ENCODE measurements at regions of chr12 and their contacts with region 1.

Region 1: DNA sequence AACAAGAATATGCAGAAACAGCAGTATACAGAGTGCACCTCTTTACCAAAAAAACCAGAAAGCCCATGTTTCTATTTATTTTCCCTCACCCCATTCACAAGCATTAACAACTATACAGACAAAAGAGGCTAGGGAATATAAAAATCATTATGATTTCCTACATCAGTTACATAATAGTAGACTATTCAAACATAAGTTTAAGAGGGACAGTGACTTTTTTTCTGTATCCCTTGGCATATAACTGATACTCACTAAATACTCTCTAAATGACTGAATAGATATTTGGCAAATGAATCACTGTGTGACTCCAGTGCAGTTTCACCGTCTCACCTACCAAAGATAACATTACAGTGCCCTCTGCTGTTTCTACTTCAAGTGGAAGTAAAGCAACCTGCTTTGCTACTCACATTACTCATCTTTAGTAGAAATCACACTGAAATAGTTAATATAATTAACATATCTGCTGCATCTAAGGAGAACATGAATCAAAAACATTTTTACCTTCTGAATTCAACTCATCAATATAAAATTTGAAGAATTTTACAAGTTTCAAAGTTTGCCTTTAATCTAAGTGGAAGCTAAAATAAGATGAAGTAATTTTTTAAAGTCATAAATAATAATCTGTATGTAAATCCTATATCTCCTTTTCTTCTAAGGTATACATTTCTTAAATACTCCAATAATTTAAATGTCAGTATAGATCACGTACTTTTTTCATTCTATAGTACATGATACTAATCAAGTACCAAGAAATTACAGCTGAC is 103.8 kb downstream of the OSBPL8 start:
- DNase-seq: no peak
- ATAC-seq: peak; percentile 55 to 85 (median 74)
- H3K4me3 ChIP-seq: no peak overlapping the region
- H3K27ac ChIP-seq: no peak overlapping the region
- H3K4me1 ChIP-seq: peaks cover 0 to 17% (median 2%) of the 10 kb centered on the region in 12 donors
- H3K27me3 ChIP-seq: no peaks in the 10 kb centered on the region
- CTCF ChIP-seq: peak; percentile 5 to 65 (median 50)
- POLR2A ChIP-seq: no peak

Region 2: GRCh38 chr12:76055393-76055792 is 400.4 kb before region 1 on chr12:
- intact Hi-C with region 1: loop called in 1 of 10 experiments (anchors 10 kb)
- DNase-seq: no peak
- ATAC-seq: no peak
- H3K4me3 ChIP-seq: no peak overlapping the region
- H3K27ac ChIP-seq: no peak overlapping the region
- H3K4me1 ChIP-seq: no peaks in the 10 kb centered on the region
- H3K27me3 ChIP-seq: no peaks in the 10 kb centered on the region
- CTCF ChIP-seq: no peak
- POLR2A ChIP-seq: no peak

Region 3: GRCh38 chr12:76074701-76075336 is 380.9 kb before region 1 on chr12:
- intact Hi-C with region 1: loop called in 2 of 10 experiments (anchors 10 kb)
- DNase-seq: no peak
- ATAC-seq: peak in 1 of 4 donors; percentile 24
- H3K4me3 ChIP-seq: no peak overlapping the region
- H3K27ac ChIP-seq: no peak overlapping the region
- H3K4me1 ChIP-seq: peaks cover 0 to 50% (median 20%) of the 10 kb centered on the region in 12 donors
- H3K27me3 ChIP-seq: no peaks in the 10 kb centered on the region
- CTCF ChIP-seq: no peak
- POLR2A ChIP-seq: no peak

Region 4: DNA sequence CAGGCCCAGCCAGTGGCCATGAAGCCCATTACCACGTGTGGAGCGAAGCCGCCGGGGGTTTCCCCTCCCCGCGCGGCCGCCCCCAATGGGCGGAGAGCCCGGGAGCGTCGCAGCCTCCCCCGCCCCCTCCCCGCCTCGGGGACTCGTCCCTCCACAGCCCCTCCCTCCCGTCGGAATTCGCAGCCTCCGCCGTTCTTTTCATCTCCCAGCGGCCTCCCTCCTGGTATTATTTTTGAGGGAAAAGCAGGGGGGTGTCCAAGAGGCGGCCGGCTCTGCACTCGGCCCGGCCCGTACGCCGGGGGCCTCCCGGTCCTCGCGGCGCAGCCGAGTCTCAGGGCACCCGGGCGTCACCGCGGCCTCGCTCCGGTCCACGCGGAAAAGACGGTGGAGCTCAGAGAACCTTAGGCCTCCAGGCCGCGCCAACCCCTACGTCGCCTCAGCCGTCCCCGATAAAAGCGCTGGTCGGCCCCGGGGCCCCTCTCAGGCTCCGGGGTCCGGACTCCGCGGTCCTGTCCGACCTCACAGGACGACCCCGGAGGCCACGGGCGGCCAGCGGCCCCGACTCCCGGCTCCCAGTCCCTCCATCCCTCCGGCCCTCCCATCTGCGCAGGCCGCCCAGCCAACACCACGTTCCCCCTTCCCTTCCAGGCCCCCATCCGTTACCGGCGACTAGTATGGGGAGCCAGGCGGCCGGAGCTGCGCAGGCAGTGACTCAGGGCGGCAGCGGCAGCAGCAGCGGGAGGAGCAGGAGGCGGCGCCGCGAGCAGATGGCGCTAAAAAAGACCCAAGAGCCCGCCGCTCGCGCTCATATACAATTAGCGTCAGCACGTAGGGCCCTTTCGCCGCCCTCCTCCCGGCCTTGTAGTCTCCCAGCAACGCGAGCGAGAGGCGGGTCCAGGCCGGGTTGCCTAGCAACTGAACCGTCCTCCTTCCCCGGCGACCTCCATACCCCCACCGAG is 371.6 kb before region 1 on chr12 and contains the start of gene NAP1L1:
- intact Hi-C with region 1: loop called in 2 of 10 experiments (anchors 10 kb)
- DNase-seq: peak; percentile 98 to 99 (median 99)
- ATAC-seq: peak; percentile 96 to 99 (median 97)
- H3K4me3 ChIP-seq: peak within 1 kb of the TSS; percentile 76 to 97 (median 90)
- H3K27ac ChIP-seq: peak within 1 kb of the TSS; percentile 95 to 100 (median 99)
- H3K4me1 ChIP-seq: peaks cover 0 to 49% (median 28%) of the 10 kb centered on the region in 12 donors
- H3K27me3 ChIP-seq: no peaks in the 10 kb centered on the region
- CTCF ChIP-seq: no peak
- POLR2A ChIP-seq: peak; percentile 26 to 96
- total RNA-seq, gene NAP1L1: 191 to 359 (median 247) TPM